ENCODE measurements at regions of chr6 and their contacts with region 1.

Region 1: DNA sequence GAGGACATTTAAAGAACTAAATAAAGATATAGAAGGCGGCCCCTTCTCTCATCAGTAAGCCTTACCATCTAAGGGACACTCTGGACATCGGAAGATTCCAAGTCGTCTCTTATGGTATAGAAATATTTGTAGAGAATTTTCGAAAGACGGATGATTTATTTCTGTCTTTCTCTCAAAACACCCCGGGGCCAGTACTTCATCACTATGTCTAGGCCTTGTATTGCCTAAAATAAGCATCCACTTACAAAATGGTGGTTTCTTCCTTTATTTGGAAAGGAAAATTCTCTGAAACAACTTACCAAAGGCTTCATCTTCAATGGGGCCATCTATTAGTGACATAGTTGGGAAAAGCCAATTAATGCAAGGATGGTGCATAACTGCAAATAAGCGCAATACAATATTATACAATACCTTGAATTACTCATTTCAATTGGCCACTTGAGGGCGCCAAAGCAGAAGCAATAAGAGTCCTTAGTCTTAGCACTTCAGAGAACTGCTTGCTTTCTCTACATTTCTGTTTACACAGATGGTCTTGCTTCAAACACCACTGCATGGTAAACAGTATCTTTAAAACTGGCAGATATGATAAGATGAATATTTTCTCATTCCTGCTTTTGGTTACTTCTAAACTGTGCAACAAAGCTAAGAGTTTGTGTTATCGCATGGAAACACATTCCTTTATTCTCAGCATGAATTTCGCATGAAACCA is 113.2 kb downstream of the VIP start:
- DNase-seq: no peak
- ATAC-seq: peak; percentile 50
- H3K4me3 Mint-ChIP-seq: no peak overlapping the region
- H3K27ac Mint-ChIP-seq: no peak overlapping the region
- H3K4me1 Mint-ChIP-seq: no peaks in the 10 kb centered on the region
- H3K27me3 Mint-ChIP-seq: peaks cover 6% of the 10 kb centered on the region
- CTCF ChIP-seq: peak; percentile 32

Region 2: GRCh38 chr6:152416652-152417051 is 447.1 kb before region 1 on chr6:
- CTCF ChIA-PET with region 1: no interaction called
- POLR2A ChIA-PET with region 1: no interaction called
- intact Hi-C with region 1: no loop called
- DNase-seq: no peak
- ATAC-seq: no peak
- H3K4me3 Mint-ChIP-seq: no peak overlapping the region
- H3K27ac Mint-ChIP-seq: no peak overlapping the region
- H3K4me1 Mint-ChIP-seq: no peaks in the 10 kb centered on the region
- H3K27me3 Mint-ChIP-seq: peaks cover 8% of the 10 kb centered on the region
- CTCF ChIP-seq: no peak

Region 3: DNA sequence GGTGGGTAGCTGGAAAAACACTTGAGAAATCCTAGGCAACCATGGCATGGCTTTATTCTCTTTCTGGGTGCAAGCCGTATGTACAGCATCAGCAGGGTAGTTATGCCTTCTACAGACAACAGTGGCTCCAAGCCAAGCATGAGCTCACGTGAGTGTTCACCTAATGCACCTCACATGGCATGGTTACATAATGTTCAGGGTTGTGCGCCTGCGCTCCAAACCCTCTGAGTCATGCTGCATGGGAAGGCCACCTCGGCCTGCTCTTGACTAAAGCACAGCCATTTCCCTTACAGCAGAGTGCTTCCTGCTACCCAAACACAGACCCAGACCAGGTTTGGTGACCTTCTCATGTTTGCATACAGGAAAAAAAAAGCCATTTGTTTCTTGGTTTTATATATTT is 16.9 kb before region 1 on chr6:
- CTCF ChIA-PET with region 1: no interaction called
- POLR2A ChIA-PET with region 1: no interaction called
- intact Hi-C with region 1: no loop called
- DNase-seq: no peak
- ATAC-seq: no peak
- H3K4me3 Mint-ChIP-seq: no peak overlapping the region
- H3K27ac Mint-ChIP-seq: no peak overlapping the region
- H3K4me1 Mint-ChIP-seq: no peaks in the 10 kb centered on the region
- H3K27me3 Mint-ChIP-seq: peaks cover 1% of the 10 kb centered on the region
- CTCF ChIP-seq: no peak

Region 4: GRCh38 chr6:152874846-152875568 is 11.2 kb after region 1 on chr6:
- CTCF ChIA-PET with region 1: no interaction called
- POLR2A ChIA-PET with region 1: no interaction called
- intact Hi-C with region 1: no loop called
- DNase-seq: no peak
- ATAC-seq: no peak
- H3K4me3 Mint-ChIP-seq: no peak overlapping the region
- H3K27ac Mint-ChIP-seq: no peak overlapping the region
- H3K4me1 Mint-ChIP-seq: no peaks in the 10 kb centered on the region
- H3K27me3 Mint-ChIP-seq: peaks cover 6% of the 10 kb centered on the region
- CTCF ChIP-seq: no peak

Region 5: GRCh38 chr6:152897799-152898399 is 34.1 kb after region 1 on chr6:
- CTCF ChIA-PET with region 1: no interaction called
- POLR2A ChIA-PET with region 1: no interaction called
- intact Hi-C with region 1: loop called (anchors 1 kb)
- DNase-seq: peak; percentile 38
- ATAC-seq: peak; percentile 85
- H3K4me3 Mint-ChIP-seq: no peak overlapping the region
- H3K27ac Mint-ChIP-seq: no peak overlapping the region
- H3K4me1 Mint-ChIP-seq: no peaks in the 10 kb centered on the region
- H3K27me3 Mint-ChIP-seq: peaks cover 6% of the 10 kb centered on the region
- CTCF ChIP-seq: peak; percentile 73

Region 6: DNA sequence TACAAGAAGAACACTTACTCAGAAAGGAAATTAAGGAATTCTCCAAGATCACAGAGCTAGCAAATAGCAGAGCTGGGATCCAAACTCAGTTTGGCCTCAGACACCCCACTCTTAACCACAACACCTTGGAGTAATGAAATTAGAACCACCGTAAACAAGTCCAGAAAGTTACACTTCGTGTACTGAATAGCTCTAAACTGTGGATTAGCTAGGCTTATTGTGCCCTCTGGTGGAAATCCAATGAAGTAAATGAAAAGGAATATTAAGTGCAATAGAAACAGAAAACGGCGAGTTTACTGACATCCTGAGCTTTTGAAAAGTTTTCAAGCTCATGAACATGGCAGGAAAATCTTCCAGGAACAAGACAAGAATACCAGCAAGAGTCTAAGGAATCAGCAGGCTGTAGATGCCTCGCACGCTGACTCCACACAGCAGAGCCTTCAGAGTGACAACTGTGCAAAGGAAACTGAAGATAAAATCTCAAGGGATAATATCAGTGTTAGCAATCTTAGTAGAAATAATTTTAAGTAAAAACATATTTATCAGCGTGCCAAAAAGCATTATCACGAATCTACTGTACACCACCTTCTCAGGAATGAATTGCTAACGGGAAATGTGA is 84.5 kb after region 1 on chr6:
- CTCF ChIA-PET with region 1: interaction called, 3 read pairs
- POLR2A ChIA-PET with region 1: no interaction called
- intact Hi-C with region 1: loop called (anchors 1 kb)
- DNase-seq: no peak
- ATAC-seq: no peak
- H3K4me3 Mint-ChIP-seq: no peak overlapping the region
- H3K27ac Mint-ChIP-seq: no peak overlapping the region
- H3K4me1 Mint-ChIP-seq: peaks cover 6% of the 10 kb centered on the region
- H3K27me3 Mint-ChIP-seq: peaks cover 24% of the 10 kb centered on the region
- CTCF ChIP-seq: peak; percentile 58

Region 7: DNA sequence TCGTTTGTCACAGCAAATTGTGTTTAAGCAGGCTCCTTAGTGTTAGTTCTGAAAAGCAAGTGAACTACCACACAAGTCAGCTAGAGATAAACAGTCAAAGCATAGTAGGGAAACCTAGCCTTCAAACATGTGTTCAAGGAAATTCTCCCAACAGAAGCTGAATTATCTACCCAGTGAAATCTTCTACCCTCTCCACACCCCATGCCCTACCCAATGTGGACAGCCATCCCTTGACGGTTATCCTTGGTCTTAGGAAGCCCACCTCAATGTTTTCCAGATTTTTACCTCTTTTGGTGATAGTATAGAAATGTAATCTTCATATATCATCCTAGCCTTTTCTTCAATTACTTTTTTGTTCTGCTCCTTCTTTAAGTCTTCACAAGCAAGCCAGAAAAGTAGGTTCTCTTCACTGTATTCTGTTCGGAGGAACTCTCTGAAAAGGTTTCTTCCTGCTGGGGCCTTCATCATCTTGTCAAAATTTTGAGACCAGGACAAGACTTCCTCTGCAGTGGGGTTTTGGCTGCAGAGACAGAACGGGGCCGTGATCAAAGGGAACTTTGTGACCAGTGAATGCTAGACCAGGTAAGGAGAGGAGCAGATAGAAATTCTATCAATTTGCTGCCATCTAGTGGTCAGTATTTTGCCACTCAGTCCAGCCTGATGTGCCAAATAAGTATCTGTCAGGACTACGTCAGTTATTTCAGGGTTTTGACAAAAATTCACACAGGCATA is 160.4 kb after region 1 on chr6:
- CTCF ChIA-PET with region 1: interaction called, 30 read pairs
- POLR2A ChIA-PET with region 1: no interaction called
- intact Hi-C with region 1: loop called (anchors 1 kb)
- DNase-seq: peak; percentile 17
- ATAC-seq: peak; percentile 78
- H3K4me3 Mint-ChIP-seq: no peak overlapping the region
- H3K27ac Mint-ChIP-seq: no peak overlapping the region
- H3K4me1 Mint-ChIP-seq: peaks cover 2% of the 10 kb centered on the region
- H3K27me3 Mint-ChIP-seq: peaks cover 16% of the 10 kb centered on the region
- CTCF ChIP-seq: no peak

Region 8: GRCh38 chr6:153511896-153512496 is 648.2 kb after region 1 on chr6:
- CTCF ChIA-PET with region 1: no interaction called
- POLR2A ChIA-PET with region 1: no interaction called
- intact Hi-C with region 1: loop called (anchors 2 kb)
- DNase-seq: no peak
- ATAC-seq: no peak
- H3K4me3 Mint-ChIP-seq: no peak overlapping the region
- H3K27ac Mint-ChIP-seq: no peak overlapping the region
- H3K4me1 Mint-ChIP-seq: no peaks in the 10 kb centered on the region
- H3K27me3 Mint-ChIP-seq: no peaks in the 10 kb centered on the region
- CTCF ChIP-seq: no peak

Region 9: DNA sequence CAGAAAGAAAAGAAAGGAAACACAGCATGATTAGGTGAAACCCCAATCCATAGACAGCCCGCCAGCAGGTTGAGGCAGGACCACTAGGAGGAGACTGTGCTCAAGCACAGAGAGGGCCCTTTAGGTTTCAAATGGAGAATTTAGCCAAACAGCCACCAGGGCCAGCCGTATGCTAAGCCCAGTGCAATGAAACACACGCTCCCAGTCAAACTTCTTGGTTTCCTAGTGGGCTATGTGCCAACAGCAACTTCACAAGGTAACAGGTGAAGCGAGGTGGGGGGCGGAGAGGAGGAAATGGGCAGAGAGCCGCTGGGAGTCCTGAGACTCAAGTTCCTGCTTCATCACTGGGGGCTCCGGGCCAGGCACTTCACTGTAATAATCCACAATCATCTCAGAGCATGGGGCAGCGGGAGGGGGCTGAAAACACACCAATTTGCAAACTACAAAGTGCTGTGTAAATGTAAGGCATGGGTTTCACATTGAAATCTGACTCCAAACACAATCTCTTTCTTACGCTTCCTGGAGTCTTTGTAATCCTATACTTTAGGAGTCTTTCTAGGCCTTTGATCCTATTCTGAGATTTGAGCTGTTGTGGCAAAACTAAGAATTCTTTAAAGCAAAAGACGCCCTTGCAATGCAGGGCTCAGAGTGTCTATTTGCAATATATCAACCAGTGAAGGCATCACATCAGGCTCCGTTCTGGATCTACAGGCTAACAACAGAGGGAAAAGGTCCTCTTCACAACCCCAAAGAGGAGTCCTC is 1292.5 kb after region 1 on chr6:
- CTCF ChIA-PET with region 1: no interaction called
- POLR2A ChIA-PET with region 1: no interaction called
- intact Hi-C with region 1: loop called (anchors 5 kb)
- DNase-seq: no peak
- ATAC-seq: peak; percentile 77
- H3K4me3 Mint-ChIP-seq: peak overlapping the region; percentile 41
- H3K27ac Mint-ChIP-seq: peak overlapping the region; percentile 18
- H3K4me1 Mint-ChIP-seq: peaks cover 23% of the 10 kb centered on the region
- H3K27me3 Mint-ChIP-seq: no peaks in the 10 kb centered on the region
- CTCF ChIP-seq: no peak

Region 10: GRCh38 chr6:154276810-154277628 is 1413.2 kb after region 1 on chr6:
- CTCF ChIA-PET with region 1: no interaction called
- POLR2A ChIA-PET with region 1: no interaction called
- intact Hi-C with region 1: loop called (anchors 5 kb)
- DNase-seq: no peak
- ATAC-seq: peak; percentile 47
- H3K4me3 Mint-ChIP-seq: peak overlapping the region; percentile 11
- H3K27ac Mint-ChIP-seq: no peak overlapping the region
- H3K4me1 Mint-ChIP-seq: peaks cover 11% of the 10 kb centered on the region
- H3K27me3 Mint-ChIP-seq: peaks cover 2% of the 10 kb centered on the region
- CTCF ChIP-seq: no peak